WTC11 (cell line): ENCODE measurements at regions of chr7 and their contacts with region 1.

Region 1: DNA sequence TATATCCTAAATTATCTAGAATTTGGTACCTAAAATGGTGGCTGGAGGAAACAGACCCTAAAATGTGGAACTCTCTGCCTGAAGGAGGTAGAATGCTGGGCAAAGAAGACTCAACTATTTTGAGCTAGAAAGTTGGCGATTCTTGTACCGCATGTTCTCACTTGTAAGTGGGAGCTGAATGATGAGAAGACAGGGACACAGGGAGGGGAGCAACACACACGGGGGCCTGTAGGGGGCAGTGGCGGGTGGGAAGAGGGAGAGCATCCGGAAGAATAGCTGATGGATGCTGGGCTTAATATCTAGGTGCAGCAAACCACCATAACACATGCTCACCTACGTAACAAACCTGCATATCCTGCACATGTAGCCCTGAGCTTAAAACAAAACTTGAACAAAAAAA is 250.6 kb downstream of the CALN1 start:
- DNase-seq: peak; percentile 74
- ATAC-seq: peak; percentile 59
- H3K4me3 Mint-ChIP-seq: no peak overlapping the region
- H3K27ac Mint-ChIP-seq: no peak overlapping the region
- H3K4me1 Mint-ChIP-seq: no peaks in the 10 kb centered on the region
- H3K27me3 Mint-ChIP-seq: no peaks in the 10 kb centered on the region
- CTCF ChIP-seq: peak; percentile 66

Region 2: GRCh38 chr7:72334066-72334465 is 172.5 kb after region 1 on chr7:
- CTCF ChIA-PET with region 1: interaction called, 24 read pairs
- POLR2A ChIA-PET with region 1: no interaction called
- DNase-seq: no peak
- ATAC-seq: 0 out of 2 replicates have a peak, but pooled peaks have one; percentile 3
- H3K4me3 Mint-ChIP-seq: peak overlapping the region; percentile 48; the same call in 1 of the 2 replicates
- H3K27ac Mint-ChIP-seq: no peak overlapping the region
- H3K4me1 Mint-ChIP-seq: peaks cover 23% of the 10 kb centered on the region
- H3K27me3 Mint-ChIP-seq: peaks cover 21% of the 10 kb centered on the region
- CTCF ChIP-seq: peak; percentile 48

Region 3: GRCh38 chr7:72453250-72453870 is 291.8 kb after region 1 on chr7:
- CTCF ChIA-PET with region 1: no interaction called
- POLR2A ChIA-PET with region 1: no interaction called
- DNase-seq: no peak
- ATAC-seq: no peak
- H3K4me3 Mint-ChIP-seq: no peak overlapping the region
- H3K27ac Mint-ChIP-seq: no peak overlapping the region
- H3K4me1 Mint-ChIP-seq: no peaks in the 10 kb centered on the region
- H3K27me3 Mint-ChIP-seq: peaks cover 3% of the 10 kb centered on the region; the same call in 1 of the 2 replicates
- CTCF ChIP-seq: no peak

Region 4: GRCh38 chr7:72493850-72494661 is 332.5 kb after region 1 on chr7:
- CTCF ChIA-PET with region 1: interaction called, 12 read pairs
- POLR2A ChIA-PET with region 1: no interaction called
- DNase-seq: peak; percentile 83
- ATAC-seq: peak; percentile 68; the same call in 1 of the 2 replicates
- H3K4me3 Mint-ChIP-seq: no peak overlapping the region
- H3K27ac Mint-ChIP-seq: no peak overlapping the region
- H3K4me1 Mint-ChIP-seq: no peaks in the 10 kb centered on the region
- H3K27me3 Mint-ChIP-seq: no peaks in the 10 kb centered on the region; the same call in 1 of the 2 replicates
- CTCF ChIP-seq: peak; percentile 82